GM10248 (cell line): ENCODE measurements at regions of chr2 and their contacts with region 1.

Region 1: GRCh38 chr2:174610243-174610995 is 12.8 kb upstream of the WIPF1 start:
- DNase-seq: no peak
- CTCF ChIP-seq: no peak

Region 2: GRCh38 chr2:174624895-174625430 is 14.5 kb after region 1 on chr2:
- CTCF ChIA-PET with region 1: interaction called, 10 read pairs
- POLR2A ChIA-PET with region 1: no interaction called
- DNase-seq: no peak
- CTCF ChIP-seq: no peak

Region 3: GRCh38 chr2:174985630-174986029 is 375.2 kb after region 1 on chr2:
- CTCF ChIA-PET with region 1: no interaction called
- POLR2A ChIA-PET with region 1: no interaction called
- DNase-seq: no peak
- CTCF ChIP-seq: peak; percentile 18